SK-N-SH (cell line): ENCODE measurements at regions of chr1 and their contacts with region 1.

Region 1: DNA sequence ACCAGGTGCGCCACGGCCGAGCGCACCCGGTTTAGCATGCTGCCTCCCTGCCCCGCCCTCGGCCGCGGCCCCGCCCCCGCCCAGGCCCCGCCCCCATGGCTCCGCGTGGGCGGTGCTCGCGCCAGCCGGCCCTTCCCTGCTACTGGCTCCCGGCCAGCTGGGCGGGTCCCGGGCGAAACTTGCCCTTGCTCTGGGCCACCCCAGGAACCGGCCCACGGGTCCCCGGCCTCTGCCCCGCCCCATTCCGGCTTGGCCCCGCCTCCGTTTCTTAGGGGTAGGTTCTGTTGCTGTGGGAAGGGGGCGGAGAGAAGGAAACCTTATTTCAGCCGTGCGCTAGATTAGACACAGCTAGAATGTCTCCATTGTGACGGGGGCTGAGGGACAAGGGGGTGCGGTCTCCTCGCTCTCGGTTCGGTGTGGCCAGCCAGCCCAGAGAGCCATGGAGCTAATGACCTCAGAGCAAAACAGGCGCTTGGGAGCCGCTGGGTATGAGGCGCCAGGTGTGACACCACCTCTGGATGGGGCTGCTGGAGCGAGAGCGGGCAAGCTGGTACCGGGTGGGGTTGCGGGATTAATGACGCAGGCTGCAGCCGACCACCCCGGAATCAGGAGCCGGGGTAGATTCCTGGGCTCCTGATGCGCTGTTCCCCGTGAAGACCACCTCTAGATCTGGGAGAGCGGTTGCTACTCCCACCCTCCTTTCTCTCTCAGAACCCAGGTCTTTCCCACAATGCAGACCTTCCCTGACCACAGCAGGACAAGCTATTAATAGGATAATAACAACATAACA is at the start of gene PPM1J:
- DNase-seq: peak; percentile 96
- H3K4me3 ChIP-seq: peak within 1 kb of the TSS; percentile 72 to 83
- H3K27ac ChIP-seq: peak within 1 kb of the TSS in 1 of 2 experiments; percentile 29; a peak in 2 of 4 replicates
- H3K4me1 ChIP-seq: peaks cover 0 to 23% of the 10 kb centered on the region in 2 experiments; a peak in 1 of 4 replicates
- H3K27me3 ChIP-seq: no peaks in the 10 kb centered on the region
- CTCF ChIP-seq: no peak
- EP300 ChIP-seq: no peak
- RAD21 ChIP-seq: no peak
- polyA plus RNA-seq, gene PPM1J: 5.3 and 6.7 TPM in 2 replicates

Region 2: GRCh38 chr1:112501810-112502641 is 213.4 kb before region 1 on chr1:
- CTCF ChIA-PET with region 1: interaction called, 47 read pairs
- POLR2A ChIA-PET with region 1: no interaction called
- DNase-seq: peak; percentile 85
- H3K4me3 ChIP-seq: peak overlapping the region; percentile 53 to 60
- H3K27ac ChIP-seq: no peak overlapping the region
- H3K4me1 ChIP-seq: peaks cover 0 to 10% of the 10 kb centered on the region in 2 experiments; a peak in 1 of 4 replicates
- H3K27me3 ChIP-seq: no peaks in the 10 kb centered on the region
- CTCF ChIP-seq: peak; percentile 77
- EP300 ChIP-seq: no peak
- RAD21 ChIP-seq: peak; percentile 70

Region 3: GRCh38 chr1:112727716-112728115 is 12.3 kb after region 1 on chr1:
- CTCF ChIA-PET with region 1: interaction called, 47 read pairs
- POLR2A ChIA-PET with region 1: interaction called, 3 read pairs
- DNase-seq: no peak
- H3K4me3 ChIP-seq: no peak overlapping the region
- H3K27ac ChIP-seq: no peak overlapping the region
- H3K4me1 ChIP-seq: no peaks in the 10 kb centered on the region
- H3K27me3 ChIP-seq: no peaks in the 10 kb centered on the region
- CTCF ChIP-seq: peak; percentile 26
- EP300 ChIP-seq: no peak
- RAD21 ChIP-seq: peak; percentile 8; the same call in 1 of the 2 replicates

Region 4: DNA sequence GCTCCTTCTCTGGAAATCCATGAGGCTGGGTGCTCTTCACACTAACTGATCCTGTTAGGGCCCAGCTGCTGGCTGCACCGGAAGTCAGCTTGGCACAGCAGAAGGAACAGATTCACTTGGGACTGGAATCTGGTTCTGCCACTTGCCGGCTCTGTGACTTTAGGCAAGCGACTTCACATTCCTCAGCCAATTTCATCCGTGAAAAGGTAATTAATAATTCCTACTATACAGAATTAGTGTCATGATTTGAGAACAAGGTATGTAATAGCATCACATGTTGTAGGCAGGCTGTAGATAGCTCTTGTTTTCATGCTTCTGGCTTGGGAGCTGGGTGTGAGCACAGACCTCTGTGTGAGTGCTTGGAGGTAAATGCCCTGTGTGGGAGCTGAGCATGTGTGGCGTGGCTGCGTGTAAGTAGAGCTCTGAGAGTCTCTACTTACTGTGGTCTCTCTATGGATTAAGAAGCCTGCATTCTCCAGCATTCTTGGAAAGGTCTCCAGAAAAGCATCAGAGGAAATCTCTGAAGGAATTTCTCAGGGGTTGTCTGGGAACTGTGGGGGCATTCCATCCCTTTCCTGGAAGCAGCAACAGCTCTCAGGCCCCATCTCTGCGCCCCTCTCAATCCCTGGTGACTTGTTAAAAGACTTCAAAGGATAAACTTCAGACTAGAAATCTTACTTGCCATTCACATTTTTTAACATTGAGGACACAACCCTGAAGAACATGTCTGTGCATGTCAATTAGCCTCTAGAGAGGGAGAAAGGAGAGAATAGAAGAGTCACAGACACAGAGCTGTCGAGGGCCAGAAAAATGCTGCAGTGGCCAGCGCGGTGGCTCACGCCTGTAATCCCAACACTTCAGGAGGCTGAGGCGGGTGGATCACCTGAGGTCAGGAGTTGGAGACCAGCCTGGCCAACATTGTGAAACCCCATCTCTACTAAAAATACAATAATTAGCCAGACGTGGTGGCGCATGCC is 47.4 kb after region 1 on chr1:
- CTCF ChIA-PET with region 1: interaction called, 20 read pairs
- POLR2A ChIA-PET with region 1: no interaction called
- DNase-seq: no peak
- H3K4me3 ChIP-seq: no peak overlapping the region
- H3K27ac ChIP-seq: peak overlapping the region in 1 of 2 experiments; percentile 5; a peak in 1 of 4 replicates
- H3K4me1 ChIP-seq: peaks cover 8 to 15% of the 10 kb centered on the region in 2 experiments; a peak in 2 of 4 replicates
- H3K27me3 ChIP-seq: no peaks in the 10 kb centered on the region
- CTCF ChIP-seq: no peak
- EP300 ChIP-seq: no peak
- RAD21 ChIP-seq: no peak

Region 5: GRCh38 chr1:112882271-112882744 is 166.8 kb after region 1 on chr1:
- CTCF ChIA-PET with region 1: interaction called, 14 read pairs
- POLR2A ChIA-PET with region 1: no interaction called
- DNase-seq: peak; percentile 23
- H3K4me3 ChIP-seq: no peak overlapping the region
- H3K27ac ChIP-seq: no peak overlapping the region
- H3K4me1 ChIP-seq: peaks cover 0 to 9% of the 10 kb centered on the region in 2 experiments; a peak in 1 of 4 replicates
- H3K27me3 ChIP-seq: no peaks in the 10 kb centered on the region
- CTCF ChIP-seq: no peak
- EP300 ChIP-seq: no peak
- RAD21 ChIP-seq: no peak